Mammary epithelial cell (primary cell): ENCODE measurements at regions of chr20 and their contacts with region 1.

Region 1: DNA sequence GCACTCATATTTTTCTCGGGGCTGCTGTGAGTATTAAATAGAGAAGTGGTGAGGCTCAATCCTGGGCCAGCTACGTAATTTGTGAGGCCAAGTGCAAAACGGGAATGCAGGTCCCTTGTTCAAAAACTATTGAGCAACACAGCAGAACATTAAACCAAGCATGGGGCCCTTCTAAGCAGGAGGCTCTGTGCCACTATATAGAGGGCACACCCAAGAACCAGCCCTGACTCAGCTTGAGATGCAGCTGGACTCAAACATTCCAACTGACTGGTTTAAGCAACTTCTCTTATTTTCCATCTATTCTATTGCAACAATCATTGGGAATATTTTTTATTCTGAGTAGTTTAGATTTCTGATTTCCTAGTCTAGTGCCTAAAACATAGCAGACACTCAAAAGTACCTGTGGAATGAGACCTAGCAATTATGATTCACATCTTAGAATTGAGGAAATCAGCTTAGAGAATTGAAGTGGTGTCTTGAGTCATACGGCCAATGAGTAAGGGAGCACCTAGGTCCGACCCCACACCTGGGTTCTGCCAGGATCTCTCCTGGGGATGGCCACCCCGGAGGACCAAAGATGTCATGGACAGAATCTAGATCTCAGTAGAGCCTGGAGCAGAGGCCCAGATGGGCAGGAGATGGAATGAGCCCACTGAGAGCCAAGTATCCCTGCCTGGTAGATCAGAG is 1.3 kb downstream of the SIRPB2 start:
- DNase-seq: peak; percentile 88
- H3K4me3 ChIP-seq: no peak overlapping the region
- H3K27ac ChIP-seq: peak overlapping the region; percentile 83
- H3K4me1 ChIP-seq: peaks cover 33% of the 10 kb centered on the region
- H3K27me3 ChIP-seq: no peaks in the 10 kb centered on the region
- CTCF ChIP-seq: no peak

Region 2: DNA sequence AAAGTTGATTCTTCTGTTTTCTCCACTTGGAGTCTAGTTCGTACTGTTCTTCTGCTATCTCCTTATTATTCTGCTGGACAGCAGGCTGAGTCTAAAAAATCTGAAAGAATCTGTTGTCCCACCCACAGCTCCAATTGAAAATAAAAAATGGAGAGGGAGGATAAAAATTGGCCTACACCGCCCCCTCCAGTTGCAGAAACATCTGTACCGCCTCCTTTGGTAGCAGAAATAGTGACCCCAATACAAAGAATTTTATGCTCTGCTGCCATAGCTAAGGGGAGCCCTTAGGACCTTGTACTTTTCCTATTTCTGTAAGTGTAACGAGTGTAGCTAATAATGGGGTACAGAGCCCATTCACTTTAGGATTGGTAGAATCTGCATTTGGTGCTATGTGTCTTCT is 92.2 kb before region 1 on chr20:
- CTCF ChIA-PET with region 1: no interaction called
- dilution Hi-C with region 1: no loop called
- in situ Hi-C with region 1: no loop called
- intact Hi-C with region 1: no loop called
- DNase-seq: no peak
- H3K4me3 ChIP-seq: no peak overlapping the region
- H3K27ac ChIP-seq: no peak overlapping the region
- H3K4me1 ChIP-seq: peaks cover 49% of the 10 kb centered on the region
- H3K27me3 ChIP-seq: no peaks in the 10 kb centered on the region
- CTCF ChIP-seq: no peak

Region 3: GRCh38 chr20:1415667-1416468 is 74.0 kb before region 1 on chr20:
- CTCF ChIA-PET with region 1: no interaction called
- dilution Hi-C with region 1: no loop called
- in situ Hi-C with region 1: no loop called
- intact Hi-C with region 1: no loop called
- DNase-seq: peak; percentile 98
- H3K4me3 ChIP-seq: no peak overlapping the region
- H3K27ac ChIP-seq: peak overlapping the region; percentile 68
- H3K4me1 ChIP-seq: peaks cover 40% of the 10 kb centered on the region
- H3K27me3 ChIP-seq: no peaks in the 10 kb centered on the region
- CTCF ChIP-seq: no peak

Region 4: DNA sequence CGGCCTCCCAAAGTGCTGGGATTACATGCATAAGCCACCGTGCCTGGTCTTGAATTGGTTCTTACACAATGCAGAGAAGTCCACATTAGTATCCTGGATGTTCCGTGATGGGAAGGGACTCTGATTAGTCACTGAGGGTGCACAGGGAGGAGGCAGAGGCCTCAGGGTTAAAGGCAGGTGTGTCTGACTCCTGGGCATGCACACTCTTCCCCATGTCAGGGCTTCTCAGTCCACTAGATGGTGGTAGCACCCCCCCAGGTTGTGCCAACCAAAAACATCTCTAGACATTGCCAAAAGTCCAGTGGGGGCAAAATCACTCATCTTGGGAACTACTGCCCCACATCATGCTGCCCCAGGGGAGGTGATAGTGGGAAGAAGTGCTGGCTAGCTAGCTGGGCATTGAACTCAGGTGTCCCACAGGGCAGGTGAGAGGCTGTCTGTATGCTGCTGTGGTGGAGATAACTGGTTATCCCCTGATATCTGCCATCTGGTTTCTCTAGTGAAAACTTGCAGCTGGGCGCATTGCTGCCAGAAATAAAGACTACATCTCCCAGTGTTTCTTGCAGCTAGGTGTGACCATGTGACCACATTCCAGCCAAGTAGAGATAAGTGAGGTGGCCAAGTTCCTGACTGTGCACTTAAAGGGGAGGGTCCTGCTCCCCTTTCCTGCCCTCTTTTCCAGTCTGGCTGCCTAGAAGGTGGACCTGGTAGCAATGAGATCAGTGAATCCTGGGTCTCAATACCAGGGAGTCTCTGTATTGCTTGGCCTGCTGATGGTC is 14.9 kb before region 1 on chr20:
- CTCF ChIA-PET with region 1: no interaction called
- dilution Hi-C with region 1: no loop called
- in situ Hi-C with region 1: no loop called
- intact Hi-C with region 1: loop called (anchors 1 kb)
- DNase-seq: peak; percentile 95
- H3K4me3 ChIP-seq: no peak overlapping the region
- H3K27ac ChIP-seq: peak overlapping the region; percentile 51
- H3K4me1 ChIP-seq: peaks cover 60% of the 10 kb centered on the region
- H3K27me3 ChIP-seq: no peaks in the 10 kb centered on the region
- CTCF ChIP-seq: peak; percentile 75 to 87